ENCODE measurements at regions of chr9 and their contacts with region 1.

Region 1: GRCh38 chr9:74412236-74412979 is 84.7 kb upstream of the RORB start:
- DNase-seq: no peak
- H3K4me3 ChIP-seq: no peak overlapping the region
- H3K27ac ChIP-seq: no peak overlapping the region
- H3K4me1 ChIP-seq: no peaks in the 10 kb centered on the region
- H3K27me3 ChIP-seq: no peaks in the 10 kb centered on the region
- CTCF ChIP-seq: no peak
- EP300 ChIP-seq: no peak
- POLR2A ChIP-seq: no peak

Region 2: DNA sequence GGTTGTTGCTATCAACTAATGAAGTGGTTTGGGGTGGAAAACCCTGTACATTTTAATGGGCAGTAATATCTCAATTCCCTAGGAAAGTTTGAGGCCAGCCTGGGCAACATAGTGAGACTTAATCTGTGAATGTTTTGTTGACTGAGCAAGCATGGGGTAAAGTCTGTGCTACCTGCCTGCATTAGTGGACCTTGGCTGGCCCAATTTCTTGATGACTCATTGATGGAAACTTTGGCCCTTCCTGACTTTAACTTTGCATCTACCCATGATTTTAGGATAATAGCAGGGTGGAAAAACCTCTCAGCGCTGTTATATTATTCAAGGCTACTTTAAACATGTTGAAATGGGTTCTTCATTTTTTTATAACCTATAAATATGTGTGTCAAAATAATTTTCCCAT is 304.7 kb before region 1 on chr9:
- in situ Hi-C with region 1: no loop called
- intact Hi-C with region 1: no loop called
- DNase-seq: no peak
- H3K4me3 ChIP-seq: no peak overlapping the region
- H3K27ac ChIP-seq: no peak overlapping the region
- H3K4me1 ChIP-seq: no peaks in the 10 kb centered on the region
- H3K27me3 ChIP-seq: no peaks in the 10 kb centered on the region
- CTCF ChIP-seq: no peak
- EP300 ChIP-seq: no peak
- POLR2A ChIP-seq: no peak

Region 3: GRCh38 chr9:74431467-74431866 is 19.1 kb after region 1 on chr9:
- in situ Hi-C with region 1: no loop called
- intact Hi-C with region 1: loop called (anchors 1 kb)
- DNase-seq: no peak
- H3K4me3 ChIP-seq: no peak overlapping the region
- H3K27ac ChIP-seq: no peak overlapping the region
- H3K4me1 ChIP-seq: no peaks in the 10 kb centered on the region
- H3K27me3 ChIP-seq: no peaks in the 10 kb centered on the region
- CTCF ChIP-seq: no peak
- EP300 ChIP-seq: no peak
- POLR2A ChIP-seq: no peak

Region 4: GRCh38 chr9:76255781-76256455 is 1843.5 kb after region 1 on chr9:
- in situ Hi-C with region 1: no loop called
- intact Hi-C with region 1: loop called (anchors 5 kb)
- DNase-seq: peak; percentile 36
- H3K4me3 ChIP-seq: no peak overlapping the region
- H3K27ac ChIP-seq: peak overlapping the region; percentile 40 to 66 (median 51)
- H3K4me1 ChIP-seq: no peaks in the 10 kb centered on the region
- H3K27me3 ChIP-seq: no peaks in the 10 kb centered on the region
- CTCF ChIP-seq: no peak
- EP300 ChIP-seq: no peak
- POLR2A ChIP-seq: no peak

Measured in transverse colon (tissue), 4 donors.